ENCODE measurements at regions of chr1 and their contacts with region 1.

Region 1: DNA sequence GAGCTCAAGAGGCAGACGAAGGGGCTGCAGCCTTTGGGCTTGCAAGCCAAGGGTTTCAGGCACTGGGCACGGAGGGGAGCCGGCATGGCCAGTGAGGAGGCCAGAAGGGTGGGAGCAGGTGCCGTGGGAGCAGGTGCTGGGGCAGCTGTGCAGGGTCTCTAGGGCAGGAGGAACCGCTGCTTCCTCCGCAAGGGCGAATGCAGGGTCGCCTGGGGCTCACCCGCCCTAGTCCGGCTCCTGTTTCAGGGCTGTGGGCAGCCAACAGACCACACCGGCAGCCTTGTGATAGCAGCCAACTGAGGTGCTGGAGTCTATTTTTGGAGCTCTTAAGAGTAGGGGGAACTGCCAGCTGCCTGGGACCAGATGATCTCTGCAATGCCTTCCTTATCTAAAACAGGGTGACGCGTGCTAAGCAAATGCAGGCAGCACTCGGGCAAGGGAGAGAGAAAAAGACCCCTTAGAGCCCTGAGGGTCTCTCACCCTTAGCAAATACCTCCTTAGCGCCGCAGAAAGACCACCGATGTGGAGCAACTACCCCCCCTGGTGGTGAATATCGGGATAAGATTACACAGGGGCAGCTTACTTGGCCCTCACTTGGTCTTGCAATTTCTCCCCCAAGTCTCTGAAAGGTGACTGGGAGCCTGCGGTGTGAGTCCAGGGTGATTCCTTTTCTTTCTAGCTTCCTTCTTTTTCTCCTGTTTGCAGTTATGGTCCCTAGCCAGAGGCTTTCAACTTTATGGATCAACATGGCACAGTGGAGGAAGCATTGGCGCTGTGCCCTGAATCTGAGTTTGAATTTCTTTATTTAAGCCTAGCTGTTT is 20.7 kb upstream of the MAPKAPK2 start:
- DNase-seq: peak; percentile 84
- ATAC-seq: peak; percentile 92
- H3K4me3 Mint-ChIP-seq: no peak overlapping the region
- H3K27ac Mint-ChIP-seq: no peak overlapping the region
- H3K4me1 Mint-ChIP-seq: peaks cover 22% of the 10 kb centered on the region
- H3K27me3 Mint-ChIP-seq: peaks cover 37% of the 10 kb centered on the region

Region 2: DNA sequence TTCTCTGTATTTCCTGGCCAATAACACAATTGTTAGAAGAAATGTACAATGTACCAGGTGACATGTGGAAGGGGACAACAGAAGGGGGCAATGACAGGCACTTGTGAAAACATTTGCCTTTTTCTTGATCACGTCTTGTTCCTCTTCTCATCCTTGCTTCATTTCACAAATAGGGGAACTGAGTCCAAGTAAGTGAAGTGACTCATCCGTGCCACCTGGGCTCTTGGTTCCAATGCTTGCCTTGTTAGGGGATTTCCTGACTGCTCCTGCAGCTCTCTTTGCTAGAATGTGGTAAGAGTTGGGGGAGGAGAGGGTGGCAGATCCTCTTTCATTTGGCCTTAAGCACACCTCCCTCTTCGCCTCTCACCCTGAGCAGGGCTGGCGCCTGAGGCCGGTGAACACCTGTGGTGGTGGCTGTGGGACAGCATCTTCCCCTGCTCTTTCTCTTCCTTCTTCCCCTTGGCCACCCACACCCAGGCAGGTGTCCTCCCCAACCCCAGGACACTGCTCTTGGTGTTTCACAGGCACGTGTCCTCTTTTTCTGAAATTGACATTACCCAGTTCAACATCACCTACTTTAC is 613.3 kb before region 1 on chr1:
- CTCF ChIA-PET with region 1: no interaction called
- POLR2A ChIA-PET with region 1: no interaction called
- DNase-seq: peak; percentile 46
- ATAC-seq: peak; percentile 91
- H3K4me3 Mint-ChIP-seq: no peak overlapping the region
- H3K27ac Mint-ChIP-seq: peak overlapping the region; percentile 60
- H3K4me1 Mint-ChIP-seq: peaks cover 32% of the 10 kb centered on the region
- H3K27me3 Mint-ChIP-seq: peaks cover 12% of the 10 kb centered on the region

Region 3: DNA sequence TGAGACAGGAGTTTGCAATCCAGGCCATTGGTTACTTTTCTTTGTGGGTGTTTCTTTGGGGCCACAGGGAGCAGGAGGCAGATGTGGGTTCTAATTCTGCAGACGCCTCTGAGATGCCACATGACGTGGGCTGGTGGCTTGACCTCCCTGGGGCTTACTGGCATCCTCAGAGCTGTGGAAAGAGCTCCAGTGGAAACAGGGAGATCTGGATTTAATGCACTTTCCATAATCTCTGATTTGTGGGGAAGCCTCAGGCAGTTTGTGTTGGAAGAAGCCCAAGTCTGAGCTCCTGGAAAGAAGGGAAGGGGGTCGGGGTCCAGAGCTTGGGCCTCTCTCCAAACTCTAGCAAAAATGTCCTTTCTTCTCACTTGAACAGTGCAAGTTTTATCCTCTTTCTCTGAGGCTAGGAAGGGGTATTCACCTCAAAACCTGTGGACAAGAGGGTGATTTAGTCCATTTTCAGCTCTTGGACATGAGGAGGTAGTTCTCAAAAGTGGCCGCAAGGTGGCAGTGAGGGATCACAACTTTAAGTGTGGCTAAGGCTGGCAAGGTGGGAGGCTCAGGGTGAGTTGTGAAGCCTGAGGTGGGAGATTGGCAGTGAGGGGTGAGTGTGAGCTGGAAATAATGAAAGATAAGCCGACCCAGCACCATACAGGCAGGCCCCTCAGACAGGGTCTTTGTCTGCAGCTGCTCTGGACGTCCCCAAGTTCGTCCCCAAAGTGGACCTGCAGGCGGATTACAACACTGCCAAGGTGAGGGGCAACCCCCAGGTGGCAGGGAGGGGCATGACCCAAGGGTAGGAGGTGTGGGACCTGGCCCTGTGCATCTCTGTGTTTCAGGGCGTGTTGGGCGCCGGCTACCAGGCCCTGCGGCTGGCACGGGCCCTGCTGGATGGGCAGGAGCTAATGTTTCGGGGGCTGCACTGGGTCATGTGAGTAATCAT is 184.6 kb before region 1 on chr1:
- CTCF ChIA-PET with region 1: interaction called, 40 read pairs
- POLR2A ChIA-PET with region 1: no interaction called
- DNase-seq: peak; percentile 80
- ATAC-seq: peak; percentile 73
- H3K4me3 Mint-ChIP-seq: no peak overlapping the region
- H3K27ac Mint-ChIP-seq: peak overlapping the region; percentile 55
- H3K4me1 Mint-ChIP-seq: peaks cover 18% of the 10 kb centered on the region
- H3K27me3 Mint-ChIP-seq: no peaks in the 10 kb centered on the region

Region 4: DNA sequence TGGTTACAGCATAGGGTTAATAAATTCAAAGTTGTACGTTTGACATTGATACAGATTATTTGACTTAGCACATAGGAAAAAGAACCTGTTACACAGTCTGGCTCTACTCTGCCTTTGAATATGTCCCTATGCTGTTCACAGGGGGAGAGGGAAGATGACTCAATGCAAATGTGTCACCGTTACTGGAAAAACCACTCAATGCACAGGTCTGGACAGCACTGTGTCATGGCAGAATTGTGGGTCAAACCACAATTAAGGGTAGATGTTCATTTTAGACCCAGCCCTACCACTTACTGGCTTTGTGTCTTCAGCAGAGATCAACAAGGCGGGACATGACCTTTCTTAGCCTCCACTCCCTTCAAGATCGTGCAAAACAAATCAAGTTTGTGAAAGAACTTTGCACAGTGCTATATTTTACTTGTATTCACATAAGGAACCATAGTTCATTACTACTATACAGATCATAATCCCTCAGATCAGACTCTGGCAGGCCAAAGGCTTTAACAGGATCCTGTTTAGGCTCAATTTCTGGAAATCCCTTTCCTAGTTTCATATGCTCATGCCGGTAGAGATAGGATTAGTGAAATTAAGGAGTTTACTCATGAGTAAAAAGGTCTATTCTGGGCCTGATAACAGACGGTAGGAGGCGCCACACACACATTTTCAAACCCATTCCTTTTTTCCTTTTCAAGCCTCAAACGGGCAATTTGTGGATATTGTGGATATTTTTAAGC is 73.8 kb before region 1 on chr1:
- CTCF ChIA-PET with region 1: interaction called, 10 read pairs
- POLR2A ChIA-PET with region 1: no interaction called
- DNase-seq: peak; percentile 83
- ATAC-seq: peak; percentile 92
- H3K4me3 Mint-ChIP-seq: peak overlapping the region; percentile 39
- H3K27ac Mint-ChIP-seq: peak overlapping the region; percentile 85
- H3K4me1 Mint-ChIP-seq: peaks cover 66% of the 10 kb centered on the region
- H3K27me3 Mint-ChIP-seq: no peaks in the 10 kb centered on the region

Region 5: DNA sequence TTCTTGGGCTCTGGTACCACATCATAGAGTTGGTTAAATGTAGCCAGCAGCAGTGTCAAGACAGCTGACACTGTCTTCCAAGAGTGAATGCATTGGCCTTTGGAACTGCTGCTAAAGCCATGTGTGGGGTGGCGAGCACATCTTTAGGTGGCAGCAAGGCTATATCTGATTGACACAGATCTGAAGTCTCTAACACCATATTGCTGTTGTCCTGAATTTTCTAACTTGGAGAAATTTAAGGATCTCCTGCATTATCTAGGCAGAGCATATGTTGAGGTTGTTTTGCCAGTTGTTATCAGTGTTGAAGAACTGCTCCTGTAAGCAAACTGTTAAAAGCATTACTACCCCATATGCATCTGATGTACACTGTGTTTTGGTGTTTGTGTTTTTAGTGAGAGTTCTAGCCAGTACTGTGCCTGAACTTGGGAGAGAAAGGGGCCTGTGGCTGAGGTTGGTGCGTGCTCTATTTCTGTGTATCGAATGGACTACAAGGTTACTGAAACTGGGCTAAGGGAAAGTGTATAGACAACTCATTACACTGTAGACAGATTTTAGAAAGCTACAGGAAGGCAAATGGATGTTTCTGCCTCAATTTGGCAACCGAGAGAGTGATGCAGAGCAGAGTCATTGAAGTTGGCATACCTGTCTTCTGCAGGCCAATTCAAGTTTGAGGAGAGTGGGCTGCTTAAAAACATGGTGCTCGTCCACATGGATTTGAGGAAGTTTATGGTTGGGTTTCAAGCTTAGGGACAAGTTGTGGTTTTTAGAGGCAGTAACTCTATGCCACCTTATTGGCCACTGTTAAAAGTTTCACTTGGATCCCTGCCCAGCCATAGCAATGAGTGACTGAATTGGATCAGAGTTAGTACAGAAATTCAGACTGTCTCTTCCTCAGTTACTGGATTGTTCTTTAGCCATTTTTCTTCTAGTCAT is 11.8 kb before region 1 on chr1:
- CTCF ChIA-PET with region 1: interaction called, 90 read pairs
- POLR2A ChIA-PET with region 1: no interaction called
- DNase-seq: no peak
- ATAC-seq: no peak
- H3K4me3 Mint-ChIP-seq: no peak overlapping the region
- H3K27ac Mint-ChIP-seq: no peak overlapping the region
- H3K4me1 Mint-ChIP-seq: no peaks in the 10 kb centered on the region
- H3K27me3 Mint-ChIP-seq: peaks cover 6% of the 10 kb centered on the region

Region 6: DNA sequence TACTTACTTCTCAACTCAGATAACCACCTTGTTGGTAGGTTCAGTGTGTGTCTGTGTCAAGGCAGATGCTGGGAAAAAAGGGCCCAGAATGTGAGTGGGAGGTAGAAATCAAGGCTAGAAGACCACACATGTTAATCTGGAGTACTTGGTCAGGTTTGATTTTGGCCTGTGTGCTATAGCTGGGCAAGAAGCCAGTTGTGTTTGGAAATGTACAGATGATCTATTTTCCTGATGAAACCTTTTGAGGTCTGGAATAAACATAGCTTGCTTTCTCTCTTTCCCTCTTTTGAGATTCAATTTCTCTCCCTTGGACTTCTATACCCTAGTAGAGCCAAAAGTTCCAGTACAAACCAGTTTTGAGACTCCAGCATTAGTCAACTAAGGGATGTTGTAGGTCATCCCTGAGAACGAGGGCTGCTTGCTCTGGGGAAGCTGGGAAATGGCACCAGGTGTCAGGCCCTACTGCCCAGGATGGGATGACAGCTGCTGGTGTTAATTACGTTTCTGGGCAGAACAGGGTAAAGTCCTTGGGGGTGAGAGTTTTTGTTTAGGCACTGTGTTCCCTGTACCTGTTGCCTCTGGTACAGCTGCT is 36.5 kb after region 1 on chr1:
- CTCF ChIA-PET with region 1: interaction called, 32 read pairs
- POLR2A ChIA-PET with region 1: no interaction called
- DNase-seq: no peak
- ATAC-seq: no peak
- H3K4me3 Mint-ChIP-seq: no peak overlapping the region
- H3K27ac Mint-ChIP-seq: no peak overlapping the region
- H3K4me1 Mint-ChIP-seq: peaks cover 59% of the 10 kb centered on the region
- H3K27me3 Mint-ChIP-seq: no peaks in the 10 kb centered on the region

Region 7: DNA sequence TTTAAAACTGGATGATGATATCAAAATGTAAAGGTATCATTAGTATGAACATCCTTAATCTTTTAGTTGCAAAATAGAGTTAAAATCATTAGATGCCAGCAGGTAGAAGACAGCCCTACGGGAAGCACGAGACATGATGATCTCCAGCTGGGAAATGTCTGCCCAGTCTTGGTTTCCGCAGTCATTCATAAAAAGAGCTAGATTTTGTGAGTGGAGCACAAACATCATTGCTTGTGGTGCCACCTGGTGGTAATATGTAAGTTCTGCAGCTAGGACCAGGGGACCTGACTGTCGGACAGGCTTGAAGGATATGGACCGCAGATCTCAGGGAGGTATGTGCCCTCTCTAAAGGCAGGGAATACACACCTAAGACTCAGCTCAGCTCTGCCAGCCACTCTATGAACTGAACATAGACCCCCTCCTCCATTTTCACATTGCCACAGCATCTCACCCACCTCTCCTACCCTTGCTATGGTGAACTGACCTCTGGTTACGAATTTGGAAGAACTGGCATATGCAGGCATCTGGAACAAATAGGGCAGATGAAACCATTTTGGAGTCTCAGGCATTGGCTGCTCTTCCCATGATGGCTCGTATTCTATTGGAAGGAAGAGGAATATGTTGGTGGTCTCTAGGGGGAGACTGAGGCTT is 248.5 kb after region 1 on chr1:
- CTCF ChIA-PET with region 1: interaction called, 23 read pairs
- POLR2A ChIA-PET with region 1: no interaction called
- DNase-seq: peak; percentile 80
- ATAC-seq: peak; percentile 64
- H3K4me3 Mint-ChIP-seq: no peak overlapping the region
- H3K27ac Mint-ChIP-seq: no peak overlapping the region
- H3K4me1 Mint-ChIP-seq: peaks cover 65% of the 10 kb centered on the region
- H3K27me3 Mint-ChIP-seq: no peaks in the 10 kb centered on the region

Region 8: GRCh38 chr1:207164086-207164485 is 500.0 kb after region 1 on chr1:
- CTCF ChIA-PET with region 1: no interaction called
- POLR2A ChIA-PET with region 1: no interaction called
- DNase-seq: no peak
- ATAC-seq: no peak
- H3K4me3 Mint-ChIP-seq: no peak overlapping the region
- H3K27ac Mint-ChIP-seq: no peak overlapping the region
- H3K4me1 Mint-ChIP-seq: no peaks in the 10 kb centered on the region
- H3K27me3 Mint-ChIP-seq: peaks cover 2% of the 10 kb centered on the region

Measured in activated CD8-positive, alpha-beta T cell treated with anti-CD3 and anti-CD28 coated beads, Interleukin-2, amount 10 ng/mL, durations not matched to agents 7 days and 5 days (primary cell).